ENCODE measurements at regions of chr12 and their contacts with region 1.

Region 1: DNA sequence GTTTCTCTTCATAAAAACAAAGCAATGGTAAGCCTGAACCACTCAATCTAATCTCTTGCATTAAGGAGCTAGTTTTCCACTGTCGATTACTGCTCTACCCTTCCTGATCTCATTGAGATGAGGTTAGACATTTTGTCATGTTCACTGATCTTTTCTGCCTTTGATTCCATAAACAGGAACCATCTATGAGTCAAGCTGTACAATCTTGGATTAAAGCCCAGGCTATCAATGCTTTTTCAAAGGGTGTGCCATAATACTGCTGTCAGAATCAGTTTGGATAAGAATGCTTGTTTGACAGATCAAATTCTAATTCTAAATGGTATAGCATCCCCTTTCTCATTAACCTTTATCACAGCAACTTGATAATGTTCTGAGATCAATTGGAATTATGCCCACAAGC is 16.1 kb downstream of the GRIP1 start:
- DNase-seq: no peak
- ATAC-seq: no peak
- H3K4me3 ChIP-seq: no peak overlapping the region
- H3K4me3 Mint-ChIP-seq: peak overlapping the region; percentile 35
- H3K27ac ChIP-seq: peak overlapping the region in 1 of 2 donors; percentile 26
- H3K27ac Mint-ChIP-seq: peak overlapping the region; percentile 39
- H3K4me1 ChIP-seq: peaks cover 30 to 37% of the 10 kb centered on the region in 2 donors
- H3K4me1 Mint-ChIP-seq: peaks cover 37% of the 10 kb centered on the region
- H3K27me3 ChIP-seq: no peaks in the 10 kb centered on the region
- H3K27me3 Mint-ChIP-seq: no peaks in the 10 kb centered on the region
- CTCF ChIP-seq: no peak

Region 2: GRCh38 chr12:66624806-66625205 is 37.9 kb before region 1 on chr12:
- CTCF ChIA-PET with region 1: no interaction called
- POLR2A ChIA-PET with region 1: no interaction called
- intact Hi-C with region 1: loop called (anchors 5 kb)
- DNase-seq: peak; percentile 26
- ATAC-seq: peak; percentile 70
- H3K4me3 ChIP-seq: peak overlapping the region in 1 of 5 experiments; percentile 6
- H3K4me3 Mint-ChIP-seq: peak overlapping the region; percentile 6
- H3K27ac ChIP-seq: peak overlapping the region in 1 of 2 donors; percentile 23
- H3K27ac Mint-ChIP-seq: no peak overlapping the region
- H3K4me1 ChIP-seq: peaks cover 31% of the 10 kb centered on the region in 2 donors
- H3K4me1 Mint-ChIP-seq: peaks cover 58% of the 10 kb centered on the region
- H3K27me3 ChIP-seq: no peaks in the 10 kb centered on the region
- H3K27me3 Mint-ChIP-seq: no peaks in the 10 kb centered on the region
- CTCF ChIP-seq: no peak

Region 3: DNA sequence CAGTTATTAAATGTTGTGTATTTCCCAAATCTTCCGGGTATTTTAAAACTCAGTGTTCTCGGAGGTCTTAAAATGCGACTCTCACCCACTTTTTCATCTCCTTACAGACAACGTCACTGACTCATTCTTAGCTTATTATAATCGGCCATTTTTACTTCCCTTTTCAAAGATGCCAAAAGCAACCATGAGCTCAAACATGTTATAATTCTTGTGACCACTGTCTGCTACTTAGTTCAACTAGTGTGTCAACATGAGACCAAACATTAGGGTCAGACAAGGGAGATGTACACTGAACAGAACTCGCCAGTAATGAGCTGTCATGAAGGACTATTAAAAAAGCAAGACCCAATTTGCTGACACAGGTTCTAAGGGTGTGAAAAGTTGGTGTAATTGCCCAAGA is 20.3 kb after region 1 on chr12:
- CTCF ChIA-PET with region 1: interaction called, 3 read pairs
- POLR2A ChIA-PET with region 1: no interaction called
- intact Hi-C with region 1: loop called (anchors 1 kb)
- DNase-seq: no peak
- ATAC-seq: no peak
- H3K4me3 ChIP-seq: no peak overlapping the region
- H3K4me3 Mint-ChIP-seq: peak overlapping the region; percentile 27
- H3K27ac ChIP-seq: no peak overlapping the region
- H3K27ac Mint-ChIP-seq: no peak overlapping the region
- H3K4me1 ChIP-seq: no peaks in the 10 kb centered on the region
- H3K4me1 Mint-ChIP-seq: peaks cover 46% of the 10 kb centered on the region
- H3K27me3 ChIP-seq: no peaks in the 10 kb centered on the region
- H3K27me3 Mint-ChIP-seq: no peaks in the 10 kb centered on the region
- CTCF ChIP-seq: no peak

Measured in B cell (primary cell).